B cell (primary cell): ENCODE measurements at regions of chr12 and their contacts with region 1.

Region 1: GRCh38 chr12:121351820-121352681 is at the start of gene ANAPC5:
- DNase-seq: peak; percentile 95
- ATAC-seq: peak; percentile 98
- H3K4me3 ChIP-seq: peak within 1 kb of the TSS; percentile 75 to 93 (median 83)
- H3K4me3 Mint-ChIP-seq: peak within 1 kb of the TSS; percentile 96
- H3K27ac ChIP-seq: peak within 1 kb of the TSS; percentile 40 to 78
- H3K27ac Mint-ChIP-seq: peak within 1 kb of the TSS; percentile 97
- H3K4me1 ChIP-seq: peaks cover 12 to 18% of the 10 kb centered on the region in 2 donors
- H3K4me1 Mint-ChIP-seq: peaks cover 27% of the 10 kb centered on the region
- H3K27me3 ChIP-seq: no peaks in the 10 kb centered on the region
- H3K27me3 Mint-ChIP-seq: no peaks in the 10 kb centered on the region
- CTCF ChIP-seq: no peak
- total RNA-seq, gene ANAPC5: 150 and 154 TPM in 2 replicates

Region 2: GRCh38 chr12:121301876-121302275 is 50.2 kb before region 1 on chr12:
- CTCF ChIA-PET with region 1: no interaction called
- POLR2A ChIA-PET with region 1: no interaction called
- intact Hi-C with region 1: no loop called
- DNase-seq: no peak
- ATAC-seq: no peak
- H3K4me3 ChIP-seq: no peak overlapping the region
- H3K4me3 Mint-ChIP-seq: no peak overlapping the region
- H3K27ac ChIP-seq: no peak overlapping the region
- H3K27ac Mint-ChIP-seq: no peak overlapping the region
- H3K4me1 ChIP-seq: peaks cover 15 to 25% of the 10 kb centered on the region in 2 donors
- H3K4me1 Mint-ChIP-seq: peaks cover 26% of the 10 kb centered on the region
- H3K27me3 ChIP-seq: no peaks in the 10 kb centered on the region
- H3K27me3 Mint-ChIP-seq: no peaks in the 10 kb centered on the region
- CTCF ChIP-seq: no peak

Region 3: DNA sequence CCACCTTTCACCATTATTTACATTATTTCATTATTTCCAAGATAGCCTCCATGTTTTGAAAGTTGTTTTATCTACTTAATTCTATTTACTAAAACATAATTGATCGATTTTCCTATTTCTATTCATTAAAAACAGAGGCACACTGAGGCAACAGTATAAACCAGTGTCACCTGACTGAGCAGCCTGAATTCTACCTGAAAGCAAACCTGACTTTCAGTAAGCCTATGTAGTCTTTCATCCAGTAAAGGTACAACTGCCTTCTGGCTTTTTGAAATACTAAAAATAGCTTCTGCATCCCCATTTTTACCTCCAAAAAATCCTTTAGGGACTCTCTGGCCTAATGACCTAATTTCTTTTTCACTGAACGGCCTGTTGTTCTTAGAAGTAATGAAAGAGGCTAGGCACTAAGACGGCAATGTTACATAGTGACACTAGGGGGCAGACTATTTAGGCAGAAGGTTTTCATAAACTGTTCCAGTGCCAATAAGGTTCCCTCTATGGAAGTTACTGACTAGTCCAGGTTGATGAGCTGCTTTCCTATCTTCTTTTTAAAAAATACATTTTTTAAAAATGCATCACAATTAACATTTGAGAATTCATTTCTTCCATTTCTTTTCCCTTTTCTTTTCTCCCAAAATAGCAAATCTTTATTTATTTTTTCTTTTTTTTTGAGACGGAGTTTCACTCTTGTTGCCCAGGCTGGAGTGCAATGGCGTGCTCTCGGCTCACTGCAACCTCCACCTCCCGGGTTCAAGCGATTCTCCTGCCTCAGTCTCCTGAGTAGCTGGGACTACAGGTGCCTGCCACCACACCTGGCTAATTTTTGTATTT is 17.3 kb before region 1 on chr12:
- CTCF ChIA-PET with region 1: interaction called, 12 read pairs
- POLR2A ChIA-PET with region 1: no interaction called
- intact Hi-C with region 1: no loop called
- DNase-seq: peak; percentile 70
- ATAC-seq: peak; percentile 73
- H3K4me3 ChIP-seq: no peak overlapping the region
- H3K4me3 Mint-ChIP-seq: no peak overlapping the region
- H3K27ac ChIP-seq: no peak overlapping the region
- H3K27ac Mint-ChIP-seq: no peak overlapping the region
- H3K4me1 ChIP-seq: no peaks in the 10 kb centered on the region
- H3K4me1 Mint-ChIP-seq: peaks cover 3% of the 10 kb centered on the region
- H3K27me3 ChIP-seq: no peaks in the 10 kb centered on the region
- H3K27me3 Mint-ChIP-seq: no peaks in the 10 kb centered on the region
- CTCF ChIP-seq: peak; percentile 92

Region 4: GRCh38 chr12:121399391-121400331 is 47.6 kb after region 1 on chr12 and contains the start of gene RNF34:
- CTCF ChIA-PET with region 1: interaction called, 3 read pairs
- POLR2A ChIA-PET with region 1: interaction called, 17 read pairs
- intact Hi-C with region 1: loop called (anchors 1 kb)
- DNase-seq: peak; percentile 99
- ATAC-seq: peak; percentile 94
- H3K4me3 ChIP-seq: peak within 1 kb of the TSS; percentile 79 to 96 (median 82)
- H3K4me3 Mint-ChIP-seq: peak within 1 kb of the TSS; percentile 93
- H3K27ac ChIP-seq: peak within 1 kb of the TSS; percentile 76 to 89
- H3K27ac Mint-ChIP-seq: peak within 1 kb of the TSS; percentile 99
- H3K4me1 ChIP-seq: peaks cover 24 to 25% of the 10 kb centered on the region in 2 donors
- H3K4me1 Mint-ChIP-seq: peaks cover 31% of the 10 kb centered on the region
- H3K27me3 ChIP-seq: no peaks in the 10 kb centered on the region
- H3K27me3 Mint-ChIP-seq: no peaks in the 10 kb centered on the region
- CTCF ChIP-seq: no peak
- total RNA-seq, gene RNF34: 79.6 and 86.7 TPM in 2 replicates

Region 5: GRCh38 chr12:121423682-121424623 is 71.9 kb after region 1 on chr12:
- CTCF ChIA-PET with region 1: interaction called, 3 read pairs
- POLR2A ChIA-PET with region 1: no interaction called
- intact Hi-C with region 1: loop called (anchors 2 kb)
- DNase-seq: no peak
- ATAC-seq: no peak
- H3K4me3 ChIP-seq: no peak overlapping the region
- H3K4me3 Mint-ChIP-seq: no peak overlapping the region
- H3K27ac ChIP-seq: no peak overlapping the region
- H3K27ac Mint-ChIP-seq: peak overlapping the region; percentile 59
- H3K4me1 ChIP-seq: peaks cover 12 to 25% of the 10 kb centered on the region in 2 donors
- H3K4me1 Mint-ChIP-seq: peaks cover 20% of the 10 kb centered on the region
- H3K27me3 ChIP-seq: no peaks in the 10 kb centered on the region
- H3K27me3 Mint-ChIP-seq: no peaks in the 10 kb centered on the region
- CTCF ChIP-seq: no peak

Region 6: DNA sequence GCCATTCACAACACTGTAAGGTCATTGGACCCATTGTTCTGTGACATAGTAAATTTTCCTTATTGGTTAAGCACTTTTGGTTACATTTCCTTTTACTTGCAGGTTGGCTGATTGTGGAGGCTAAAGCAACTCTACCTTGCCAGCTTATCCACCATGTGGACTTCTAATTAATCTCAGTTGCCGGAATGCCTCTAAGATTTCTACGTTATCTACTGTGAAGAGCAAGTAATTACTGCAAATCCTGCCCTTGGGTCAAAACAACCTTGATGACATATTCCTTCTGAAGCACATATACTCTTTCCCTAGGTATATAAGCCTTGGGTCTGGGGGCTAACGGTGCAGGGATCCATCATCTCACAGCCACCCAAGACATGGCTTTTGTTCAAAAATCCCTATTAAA is 336.9 kb after region 1 on chr12:
- CTCF ChIA-PET with region 1: no interaction called
- POLR2A ChIA-PET with region 1: interaction called, 5 read pairs
- intact Hi-C with region 1: loop called (anchors 5 kb)
- DNase-seq: no peak
- ATAC-seq: no peak
- H3K4me3 ChIP-seq: no peak overlapping the region
- H3K4me3 Mint-ChIP-seq: no peak overlapping the region
- H3K27ac ChIP-seq: no peak overlapping the region
- H3K27ac Mint-ChIP-seq: peak overlapping the region; percentile 10
- H3K4me1 ChIP-seq: peaks cover 4 to 16% of the 10 kb centered on the region in 2 donors
- H3K4me1 Mint-ChIP-seq: peaks cover 8% of the 10 kb centered on the region
- H3K27me3 ChIP-seq: no peaks in the 10 kb centered on the region
- H3K27me3 Mint-ChIP-seq: no peaks in the 10 kb centered on the region
- CTCF ChIP-seq: no peak

Region 7: GRCh38 chr12:121888478-121889266 is 536.6 kb after region 1 on chr12 and contains the start of gene PSMD9:
- CTCF ChIA-PET with region 1: no interaction called
- POLR2A ChIA-PET with region 1: no interaction called
- intact Hi-C with region 1: loop called (anchors 1 kb)
- DNase-seq: peak; percentile 98
- ATAC-seq: peak; percentile 96
- H3K4me3 ChIP-seq: peak within 1 kb of the TSS; percentile 70 to 92 (median 78)
- H3K4me3 Mint-ChIP-seq: peak within 1 kb of the TSS; percentile 99
- H3K27ac ChIP-seq: peak within 1 kb of the TSS; percentile 86 to 95
- H3K27ac Mint-ChIP-seq: peak within 1 kb of the TSS; percentile 99
- H3K4me1 ChIP-seq: peaks cover 15 to 19% of the 10 kb centered on the region in 2 donors
- H3K4me1 Mint-ChIP-seq: peaks cover 32% of the 10 kb centered on the region
- H3K27me3 ChIP-seq: peaks cover 0 to 5% (median 0%) of the 10 kb centered on the region in 4 experiments
- H3K27me3 Mint-ChIP-seq: no peaks in the 10 kb centered on the region
- CTCF ChIP-seq: peak; percentile 68
- total RNA-seq, gene PSMD9: 37.1 and 38.2 TPM in 2 replicates